Activated T-helper 1 cell treated with anti-CD3 and anti-CD28 coated beads, Interleukin-12 subunit alpha, Interleukin-12 subunit beta, Interleukin-2, Interleukin-4 antibody, amounts not matched to agents 30 ng/mL and 10 ng/mL and 1 ng/mL, durations not matched to agents 14 hours and 24 hours and 36 hours (primary cell): ENCODE measurements at regions of chr17 and their contacts with region 1.

Region 1: DNA sequence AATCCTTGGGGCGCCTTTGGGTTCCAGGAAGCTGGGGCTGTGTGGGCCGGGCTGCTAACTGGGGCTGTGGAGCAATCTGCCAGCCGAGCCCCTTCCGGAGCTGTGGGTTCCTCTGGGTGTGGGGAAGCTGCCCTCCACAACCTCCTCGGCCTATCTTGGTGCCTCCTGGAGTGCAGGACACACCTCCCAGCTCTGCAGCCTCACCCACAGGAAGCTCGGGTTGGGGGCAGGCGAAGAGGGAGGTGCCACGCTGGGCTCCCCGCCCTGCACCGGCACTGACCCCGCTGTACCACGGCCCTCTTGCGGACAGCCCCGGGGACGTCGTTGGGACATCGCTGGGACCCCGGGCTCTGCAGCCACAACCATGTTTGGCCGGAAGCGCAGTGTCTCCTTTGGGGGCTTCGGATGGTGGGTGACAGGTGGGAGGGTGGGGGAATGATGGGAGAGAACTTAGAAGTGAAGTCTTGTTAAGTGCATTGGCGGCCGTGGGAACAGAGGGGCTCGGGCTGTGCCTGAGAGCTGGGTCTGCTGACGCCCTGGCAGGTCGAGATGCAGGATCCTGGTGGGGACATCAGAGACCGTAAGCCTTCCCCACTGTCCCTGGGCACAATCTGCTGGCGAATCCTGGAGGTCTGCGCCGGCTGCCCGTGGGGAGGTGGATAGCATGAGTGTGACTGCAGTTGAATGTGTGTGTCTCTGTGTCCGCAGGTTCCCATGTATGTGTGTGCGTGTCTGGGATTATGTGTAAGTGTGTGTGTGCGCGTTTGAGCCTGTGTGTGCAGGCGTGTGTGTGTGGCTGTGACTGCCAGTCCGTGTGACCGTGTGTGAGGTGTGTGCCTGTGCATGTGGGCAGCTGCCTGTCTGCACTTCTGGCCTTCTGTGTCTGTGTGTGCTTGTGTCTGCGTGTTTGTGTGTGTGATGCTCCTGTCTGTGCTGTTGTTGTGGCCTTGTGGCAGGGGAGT is at the start of gene RAP1GAP2:
- DNase-seq: peak; percentile 74
- H3K4me3 Mint-ChIP-seq: peak within 1 kb of the TSS; percentile 68
- H3K27ac Mint-ChIP-seq: peak within 1 kb of the TSS; percentile 18
- H3K4me1 Mint-ChIP-seq: peaks cover 72% of the 10 kb centered on the region
- H3K27me3 Mint-ChIP-seq: peaks cover 7% of the 10 kb centered on the region
- total RNA-seq, gene RAP1GAP2: 0.20 and 0.34 TPM in 2 replicates

Region 2: DNA sequence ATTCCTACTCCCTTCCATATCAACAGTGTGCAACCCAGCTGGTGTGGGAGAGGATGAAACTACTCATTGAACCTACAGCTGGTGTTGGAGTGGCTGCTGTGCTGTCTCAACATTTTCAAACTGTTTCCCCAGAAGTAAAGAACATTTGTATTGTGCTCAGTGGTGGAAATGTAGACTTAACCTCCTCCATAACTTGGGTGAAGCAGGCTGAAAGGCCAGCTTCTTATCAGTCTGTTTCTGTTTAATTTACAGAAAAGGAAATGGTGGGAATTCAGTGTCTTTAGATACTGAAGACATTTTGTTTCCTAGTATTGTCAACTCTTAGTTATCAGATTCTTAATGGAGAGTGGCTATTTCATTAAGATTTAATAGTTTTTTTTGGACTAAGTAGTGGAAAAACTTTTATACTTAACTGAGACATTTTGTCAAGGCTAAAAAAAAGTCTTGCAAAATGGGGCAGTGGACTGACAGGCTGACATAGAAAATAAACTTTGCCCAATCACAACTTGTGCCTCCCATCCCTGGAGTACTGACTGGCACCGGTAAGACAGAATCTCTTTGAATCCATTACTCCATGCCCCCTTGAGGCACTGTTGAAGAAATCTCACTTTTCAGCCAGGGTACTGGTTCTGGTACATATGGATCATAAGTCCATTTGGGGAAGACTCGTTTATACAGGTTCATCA is 472.7 kb before region 1 on chr17:
- intact Hi-C with region 1: no loop called
- DNase-seq: no peak
- H3K4me3 Mint-ChIP-seq: no peak overlapping the region
- H3K27ac Mint-ChIP-seq: no peak overlapping the region
- H3K4me1 Mint-ChIP-seq: no peaks in the 10 kb centered on the region
- H3K27me3 Mint-ChIP-seq: no peaks in the 10 kb centered on the region

Region 3: DNA sequence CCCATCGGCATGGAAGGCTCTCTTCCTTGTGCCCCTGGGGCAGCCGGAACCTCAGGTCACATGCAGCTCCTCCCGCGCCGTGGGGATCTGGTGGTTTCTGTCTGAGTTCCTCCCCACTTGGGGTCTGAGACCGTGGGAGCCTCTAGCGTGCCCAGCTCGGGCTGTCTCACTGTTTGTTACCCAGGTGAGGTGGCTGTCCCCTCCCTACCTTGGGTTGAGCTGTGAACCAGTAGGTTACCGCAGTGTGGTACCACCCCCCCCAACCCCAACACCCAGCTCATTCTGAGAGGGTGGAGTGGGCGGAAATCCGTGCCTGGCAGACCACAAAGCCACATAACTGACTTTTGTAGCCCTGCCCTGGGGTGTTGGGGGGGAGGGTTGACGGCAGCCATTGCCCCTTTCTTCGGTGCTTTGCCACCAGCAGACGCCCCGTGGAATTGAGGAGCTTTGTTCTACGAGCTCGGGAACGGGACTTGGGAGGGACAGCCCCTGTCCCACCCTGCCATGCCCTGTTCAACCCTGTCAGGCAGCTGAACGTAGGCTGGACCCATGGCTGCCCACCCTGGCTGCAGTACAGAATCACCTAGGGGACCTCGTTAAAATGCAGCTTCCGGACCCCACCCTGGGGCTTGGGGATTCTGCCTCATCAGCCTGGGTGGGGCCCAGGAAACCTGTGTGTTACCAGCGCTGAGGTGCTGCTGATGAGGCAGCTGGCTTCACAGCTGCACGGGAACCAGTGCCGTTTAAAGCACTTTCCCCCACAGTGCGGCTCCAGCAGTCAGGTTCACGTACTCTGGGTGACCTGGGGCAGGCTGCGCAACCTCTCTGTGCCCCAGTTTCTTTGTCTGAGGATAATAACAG is 18.3 kb after region 1 on chr17:
- intact Hi-C with region 1: loop called (anchors 1 kb)
- DNase-seq: peak; percentile 89
- H3K4me3 Mint-ChIP-seq: peak overlapping the region; percentile 37
- H3K27ac Mint-ChIP-seq: no peak overlapping the region
- H3K4me1 Mint-ChIP-seq: peaks cover 23% of the 10 kb centered on the region
- H3K27me3 Mint-ChIP-seq: peaks cover 34% of the 10 kb centered on the region